Posterior vena cava (tissue), 2 donors: ENCODE measurements at regions of chr11 and their contacts with region 1.

Region 1: DNA sequence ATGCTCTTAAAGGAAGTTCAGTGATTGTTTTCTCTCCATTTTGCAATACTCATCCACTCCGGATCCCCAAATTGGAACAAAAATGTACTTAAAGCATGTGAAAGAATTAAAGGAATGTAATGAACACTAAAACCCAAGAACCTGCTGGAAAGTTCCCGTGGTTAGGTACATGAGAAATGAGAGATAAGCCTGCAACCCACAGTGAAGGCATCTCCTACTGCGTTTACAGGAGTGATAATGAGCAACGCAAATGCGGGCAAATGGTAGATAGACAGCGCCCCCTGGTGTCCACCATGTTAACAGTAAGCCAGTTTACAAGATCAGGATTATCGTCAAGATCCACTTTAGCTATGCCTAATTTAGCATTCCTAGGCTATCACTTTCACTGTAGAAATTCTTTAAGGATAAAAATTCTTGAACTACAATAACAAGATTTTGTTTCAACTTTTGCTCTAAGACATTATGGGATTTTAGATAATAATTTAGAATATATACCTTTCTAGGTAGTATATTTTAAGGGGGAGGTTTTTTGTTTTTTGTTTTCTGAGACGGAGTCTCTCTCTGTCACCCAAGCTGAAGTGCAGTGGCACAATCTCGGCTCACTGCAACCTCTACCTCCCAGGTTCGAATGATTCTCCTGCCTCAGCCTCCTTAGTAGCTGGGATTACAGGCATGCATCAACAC is 29.9 kb downstream of the ALG9 start:
- DNase-seq: peak; percentile 95

Region 2: GRCh38 chr11:111565114-111565720 is 276.3 kb before region 1 on chr11:
- intact Hi-C with region 1: loop called (anchors 10 kb)
- DNase-seq: no peak

Region 3: DNA sequence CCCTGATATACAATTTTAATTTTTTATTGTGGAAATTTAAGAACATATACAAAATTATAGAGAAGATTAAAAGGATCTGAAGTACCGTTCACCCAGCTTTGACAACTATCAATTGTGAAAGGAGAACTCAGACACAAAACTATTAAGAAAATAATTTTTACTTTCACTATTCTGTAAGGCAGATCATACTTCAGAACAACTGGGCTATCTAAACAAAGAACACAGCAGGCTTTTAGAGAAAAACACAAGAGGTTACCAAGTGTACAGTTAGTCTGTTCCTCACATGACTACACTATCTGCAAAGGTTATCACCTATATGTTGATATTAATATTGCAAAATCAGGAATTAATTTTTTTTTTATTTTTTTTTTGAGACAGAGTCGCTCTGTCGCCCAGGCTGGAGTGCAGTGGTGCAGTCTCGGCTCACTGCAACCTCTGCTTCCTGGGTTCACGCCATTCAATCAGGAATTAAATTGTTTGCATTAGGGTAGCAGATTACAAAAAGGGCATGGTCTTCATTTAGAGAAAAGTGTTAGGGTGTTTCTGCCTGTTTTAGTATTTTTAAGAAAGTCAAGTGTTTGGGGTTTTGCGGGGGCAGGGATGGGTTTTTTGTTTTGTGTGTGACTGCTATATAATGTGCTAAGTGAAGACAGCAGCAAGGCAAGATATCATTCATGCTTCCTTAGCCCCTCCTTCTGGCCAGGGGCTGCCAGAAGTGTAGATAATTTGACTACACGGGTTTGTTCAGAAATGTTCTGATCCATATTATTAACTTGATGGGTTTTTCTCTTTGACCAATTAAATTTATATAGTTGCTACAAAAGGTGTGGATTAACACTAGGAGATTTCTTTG is 266.9 kb before region 1 on chr11:
- intact Hi-C with region 1: loop called (anchors 10 kb)
- DNase-seq: no peak

Region 4: GRCh38 chr11:111762981-111763643 is 78.4 kb before region 1 on chr11:
- intact Hi-C with region 1: no loop called
- DNase-seq: no peak

Region 5: DNA sequence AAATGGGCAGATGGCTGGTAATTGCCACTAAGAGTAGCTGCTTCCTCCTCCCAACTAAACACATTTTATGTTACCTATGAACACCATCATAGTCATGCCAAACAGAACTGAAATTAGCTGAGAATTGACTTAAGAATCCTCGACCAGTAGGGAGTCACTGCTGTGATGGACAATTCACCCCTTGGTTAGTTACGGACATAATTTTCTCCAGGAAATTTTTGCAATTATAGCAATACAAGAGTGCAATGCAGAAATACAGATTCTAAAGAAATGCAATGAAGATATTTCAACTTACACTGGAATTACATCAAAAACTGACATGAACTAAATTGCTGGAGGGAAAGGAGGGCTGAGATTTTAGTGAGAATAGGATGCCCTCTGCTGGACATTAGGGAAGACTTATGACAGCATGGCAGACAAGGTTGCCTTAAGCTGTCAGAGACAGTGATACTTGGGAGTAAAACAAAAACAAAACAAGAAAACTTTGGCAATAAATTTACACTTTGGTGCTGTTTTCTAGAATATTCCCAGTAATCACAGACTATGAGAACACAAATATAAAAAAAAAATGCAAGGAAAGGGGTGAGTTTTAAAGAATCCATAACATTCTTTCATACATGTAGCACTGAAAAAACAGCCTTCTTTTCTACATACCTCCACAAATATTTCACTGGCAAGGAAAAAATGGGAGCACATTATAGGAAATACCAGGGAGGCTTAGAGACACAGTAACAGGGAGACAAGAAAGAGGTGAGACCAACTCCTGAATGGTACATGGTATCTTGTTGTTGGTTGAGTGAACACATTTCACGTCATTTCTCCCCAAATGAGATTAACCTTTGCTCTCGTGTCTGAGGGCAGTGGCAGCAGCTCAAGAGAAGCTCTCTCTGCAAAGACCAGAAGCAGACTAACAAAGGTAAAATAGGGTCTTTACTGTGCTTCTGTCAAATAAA is 64.1 kb before region 1 on chr11:
- intact Hi-C with region 1: loop called in 1 of 2 experiments (anchors 10 kb)
- DNase-seq: no peak

Region 6: GRCh38 chr11:111801135-111801534 is 40.4 kb before region 1 on chr11:
- intact Hi-C with region 1: no loop called
- DNase-seq: no peak